A549 (cell line): ENCODE measurements at regions of chr20 and their contacts with region 1.

Region 1: DNA sequence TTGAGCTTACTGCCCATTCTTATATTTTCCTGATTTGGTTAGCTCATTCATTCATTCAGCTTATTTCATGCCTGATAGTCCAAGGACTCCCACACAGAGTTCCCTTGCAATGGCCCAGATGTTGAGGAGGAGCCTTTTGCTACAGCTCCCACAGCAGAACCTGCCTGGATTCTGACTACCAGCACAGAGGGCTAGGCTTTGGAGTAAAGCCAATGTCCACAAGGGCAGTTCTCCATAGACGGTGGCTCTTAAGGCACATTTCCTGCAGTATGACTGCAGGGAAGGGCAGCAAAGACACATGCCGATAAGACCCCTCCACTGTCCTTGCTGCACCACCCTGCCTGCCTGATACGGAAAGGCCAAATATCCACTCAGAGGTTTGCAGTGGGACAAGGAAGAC is 112.3 kb upstream of the SYNDIG1 start:
- DNase-seq: peak in 1 of 2 experiments; percentile 9
- ATAC-seq: no peak
- H3K4me3 ChIP-seq: no peak overlapping the region
- H3K27ac ChIP-seq: no peak overlapping the region
- H3K4me1 ChIP-seq: no peaks in the 10 kb centered on the region
- CTCF ChIP-seq: no peak
- EP300 ChIP-seq: no peak
- POLR2A ChIP-seq: no peak
- RAD21 ChIP-seq: no peak

Region 2: GRCh38 chr20:24303381-24303780 is 53.8 kb before region 1 on chr20:
- CTCF ChIA-PET with region 1: no interaction called
- POLR2A ChIA-PET with region 1: no interaction called
- DNase-seq: peak in 1 of 2 experiments; percentile 33
- ATAC-seq: peak in 1 of 2 experiments; percentile 59; a peak in 2 of 6 replicates
- H3K4me3 ChIP-seq: no peak overlapping the region
- H3K27ac ChIP-seq: no peak overlapping the region
- H3K4me1 ChIP-seq: no peaks in the 10 kb centered on the region
- CTCF ChIP-seq: no peak
- EP300 ChIP-seq: no peak
- POLR2A ChIP-seq: no peak
- RAD21 ChIP-seq: peak; percentile 20 to 36; a peak in 2 of 5 replicates

Region 3: GRCh38 chr20:24370249-24370648 is 13.1 kb after region 1 on chr20:
- CTCF ChIA-PET with region 1: interaction called, 20 read pairs
- POLR2A ChIA-PET with region 1: no interaction called
- DNase-seq: no peak
- ATAC-seq: no peak
- H3K4me3 ChIP-seq: no peak overlapping the region
- H3K27ac ChIP-seq: no peak overlapping the region
- H3K4me1 ChIP-seq: no peaks in the 10 kb centered on the region
- CTCF ChIP-seq: no peak
- EP300 ChIP-seq: no peak
- POLR2A ChIP-seq: no peak
- RAD21 ChIP-seq: no peak